ENCODE measurements at regions of chr5 and their contacts with region 1.

Region 1: DNA sequence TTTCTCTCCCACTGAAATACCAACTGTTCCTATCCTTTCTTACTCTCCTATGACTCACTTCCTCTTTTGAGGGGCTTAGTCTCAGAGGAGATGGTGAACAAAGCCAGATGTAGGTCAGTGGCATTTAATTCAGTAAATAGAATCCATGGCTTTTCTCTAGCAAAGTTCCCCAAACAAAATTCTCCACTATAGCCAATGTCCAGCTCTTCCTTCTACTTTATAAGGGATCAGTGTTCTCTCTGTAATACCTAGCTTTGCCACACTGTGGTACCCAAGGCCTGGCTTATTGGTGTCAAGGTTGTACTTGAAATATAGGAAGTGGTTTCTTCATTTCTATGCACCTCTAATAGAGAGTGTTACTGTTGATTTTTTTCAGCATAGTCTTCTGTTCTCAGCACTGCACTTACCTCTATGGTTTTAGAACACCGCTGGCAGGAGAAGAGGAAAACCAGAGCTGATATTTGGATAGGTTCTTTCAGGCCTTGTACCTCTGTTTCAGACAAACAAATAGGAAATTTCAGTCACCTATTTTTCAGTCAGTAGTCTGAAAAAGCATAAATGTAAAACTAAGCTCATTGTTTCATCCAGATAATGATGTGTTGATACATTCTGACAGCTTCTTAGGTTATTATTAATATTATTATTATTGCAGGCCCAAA is 40.6 kb upstream of the ITGA2 start:
- DNase-seq: peak; percentile 78
- ATAC-seq: peak; percentile 99
- H3K4me3 Mint-ChIP-seq: no peak overlapping the region
- H3K27ac Mint-ChIP-seq: peak overlapping the region; percentile 47
- H3K4me1 Mint-ChIP-seq: peaks cover 24% of the 10 kb centered on the region
- H3K27me3 Mint-ChIP-seq: no peaks in the 10 kb centered on the region
- CTCF ChIP-seq: peak; percentile 85

Region 2: GRCh38 chr5:52961274-52961681 is 12.7 kb after region 1 on chr5:
- CTCF ChIA-PET with region 1: interaction called, 27 read pairs
- POLR2A ChIA-PET with region 1: no interaction called
- intact Hi-C with region 1: no loop called
- DNase-seq: no peak
- ATAC-seq: no peak
- H3K4me3 Mint-ChIP-seq: no peak overlapping the region
- H3K27ac Mint-ChIP-seq: no peak overlapping the region
- H3K4me1 Mint-ChIP-seq: no peaks in the 10 kb centered on the region
- H3K27me3 Mint-ChIP-seq: no peaks in the 10 kb centered on the region
- CTCF ChIP-seq: no peak

Region 3: GRCh38 chr5:52989781-52990527 is 41.4 kb after region 1 on chr5:
- CTCF ChIA-PET with region 1: interaction called, 33 read pairs
- POLR2A ChIA-PET with region 1: no interaction called
- intact Hi-C with region 1: loop called (anchors 5 kb)
- DNase-seq: peak; percentile 56
- ATAC-seq: peak; percentile 50
- H3K4me3 Mint-ChIP-seq: peak overlapping the region; percentile 65
- H3K27ac Mint-ChIP-seq: no peak overlapping the region
- H3K4me1 Mint-ChIP-seq: peaks cover 18% of the 10 kb centered on the region
- H3K27me3 Mint-ChIP-seq: peaks cover 50% of the 10 kb centered on the region
- CTCF ChIP-seq: no peak

Region 4: GRCh38 chr5:53035868-53036381 is 87.4 kb after region 1 on chr5:
- CTCF ChIA-PET with region 1: interaction called, 16 read pairs
- POLR2A ChIA-PET with region 1: no interaction called
- intact Hi-C with region 1: loop called (anchors 5 kb)
- DNase-seq: peak; percentile 20
- ATAC-seq: no peak
- H3K4me3 Mint-ChIP-seq: no peak overlapping the region
- H3K27ac Mint-ChIP-seq: no peak overlapping the region
- H3K4me1 Mint-ChIP-seq: peaks cover 40% of the 10 kb centered on the region
- H3K27me3 Mint-ChIP-seq: no peaks in the 10 kb centered on the region
- CTCF ChIP-seq: peak; percentile 70

Region 5: GRCh38 chr5:53089345-53089991 is 140.9 kb after region 1 on chr5:
- CTCF ChIA-PET with region 1: interaction called, 144 read pairs
- POLR2A ChIA-PET with region 1: interaction called, 4 read pairs
- intact Hi-C with region 1: no loop called
- DNase-seq: no peak
- ATAC-seq: peak; percentile 82
- H3K4me3 Mint-ChIP-seq: peak overlapping the region; percentile 50
- H3K27ac Mint-ChIP-seq: peak overlapping the region; percentile 80
- H3K4me1 Mint-ChIP-seq: peaks cover 32% of the 10 kb centered on the region
- H3K27me3 Mint-ChIP-seq: no peaks in the 10 kb centered on the region
- CTCF ChIP-seq: no peak

Region 6: GRCh38 chr5:53095931-53096525 is 147.5 kb after region 1 on chr5:
- CTCF ChIA-PET with region 1: interaction called, 144 read pairs
- POLR2A ChIA-PET with region 1: interaction called, 4 read pairs
- intact Hi-C with region 1: loop called (anchors 1 kb)
- DNase-seq: peak; percentile 86
- ATAC-seq: peak; percentile 88
- H3K4me3 Mint-ChIP-seq: no peak overlapping the region
- H3K27ac Mint-ChIP-seq: no peak overlapping the region
- H3K4me1 Mint-ChIP-seq: peaks cover 3% of the 10 kb centered on the region
- H3K27me3 Mint-ChIP-seq: no peaks in the 10 kb centered on the region
- CTCF ChIP-seq: peak; percentile 81

Region 7: GRCh38 chr5:53109443-53110127 is 161.0 kb after region 1 on chr5 and contains the start of gene MOCS2:
- CTCF ChIA-PET with region 1: interaction called, 20 read pairs
- POLR2A ChIA-PET with region 1: interaction called, 4 read pairs
- intact Hi-C with region 1: no loop called
- DNase-seq: peak; percentile 92
- ATAC-seq: peak; percentile 99
- H3K4me3 Mint-ChIP-seq: peak within 1 kb of the TSS; percentile 95
- H3K27ac Mint-ChIP-seq: peak within 1 kb of the TSS; percentile 93
- H3K4me1 Mint-ChIP-seq: peaks cover 41% of the 10 kb centered on the region
- H3K27me3 Mint-ChIP-seq: no peaks in the 10 kb centered on the region
- CTCF ChIP-seq: no peak
- total RNA-seq, gene MOCS2: 18.6 to 19.9 TPM